ENCODE measurements at regions of chr1 and their contacts with region 1.

Region 1: GRCh38 chr1:205591522-205592351 is 40.1 kb downstream of the ELK4 start:
- DNase-seq: peak; percentile 72 to 94 (median 86)
- ATAC-seq: peak; percentile 83 to 89 (median 88)
- H3K4me3 ChIP-seq: peak overlapping the region; percentile 39 to 46
- H3K4me3 Mint-ChIP-seq: peak overlapping the region; percentile 74 to 89 (median 79)
- H3K27ac ChIP-seq: peak overlapping the region; percentile 89
- H3K27ac Mint-ChIP-seq: peak overlapping the region; percentile 86 to 88
- H3K4me1 ChIP-seq: peaks cover 14 to 33% of the 10 kb centered on the region in 2 experiments
- H3K4me1 Mint-ChIP-seq: peaks cover 40 to 54% (median 51%) of the 10 kb centered on the region in 3 donors
- H3K27me3 ChIP-seq: peaks cover 0 to 6% of the 10 kb centered on the region in 2 experiments
- H3K27me3 Mint-ChIP-seq: no peaks in the 10 kb centered on the region

Region 2: GRCh38 chr1:205613288-205613687 is 21.6 kb after region 1 on chr1:
- CTCF ChIA-PET with region 1: interaction called in 1 of 2 experiments, 5 read pairs
- POLR2A ChIA-PET with region 1: interaction called in 1 of 2 experiments, 10 read pairs
- DNase-seq: peak in 1 of 35 experiments; percentile 23
- ATAC-seq: no peak
- H3K4me3 ChIP-seq: no peak overlapping the region
- H3K4me3 Mint-ChIP-seq: no peak overlapping the region
- H3K27ac ChIP-seq: no peak overlapping the region
- H3K27ac Mint-ChIP-seq: no peak overlapping the region
- H3K4me1 ChIP-seq: peaks cover 5 to 21% of the 10 kb centered on the region in 2 experiments
- H3K4me1 Mint-ChIP-seq: peaks cover 55 to 58% (median 56%) of the 10 kb centered on the region in 3 donors
- H3K27me3 ChIP-seq: no peaks in the 10 kb centered on the region
- H3K27me3 Mint-ChIP-seq: no peaks in the 10 kb centered on the region

Region 3: DNA sequence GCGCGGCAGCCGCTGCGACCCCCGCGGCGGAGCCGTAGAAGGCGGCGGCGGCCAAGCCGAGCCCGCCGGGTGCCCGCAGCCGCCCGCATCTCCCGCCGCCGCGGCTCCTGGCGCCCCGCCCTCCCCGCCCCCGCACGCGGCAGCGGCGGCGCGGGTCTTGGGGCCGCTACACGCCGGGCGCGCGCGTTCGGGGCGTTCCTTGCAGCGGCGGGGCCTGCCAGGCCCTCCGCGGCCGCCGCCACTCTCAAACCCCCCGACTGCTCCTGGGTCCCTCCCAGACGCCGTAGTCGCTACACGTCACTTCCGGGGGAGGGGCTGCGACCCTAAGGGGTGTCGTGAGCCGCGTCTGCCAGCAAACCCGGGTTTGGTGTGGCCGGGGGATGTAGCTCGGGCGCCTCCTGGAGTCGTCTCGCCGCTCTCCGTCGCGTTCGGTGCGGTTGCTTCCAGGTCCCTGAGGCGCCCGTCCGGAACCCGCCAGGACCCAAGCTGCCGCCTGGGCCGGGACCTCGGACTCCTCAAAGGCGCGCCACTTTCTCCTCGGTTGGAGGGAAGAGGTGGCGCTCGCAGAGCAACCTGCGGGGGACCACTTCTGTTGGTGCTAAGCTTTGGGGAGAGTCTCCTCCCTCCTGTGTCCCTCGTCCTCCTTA is 40.1 kb after region 1 on chr1 and contains the start of gene ELK4:
- CTCF ChIA-PET with region 1: interaction called, 17 to 89 read pairs
- POLR2A ChIA-PET with region 1: interaction called, 8 to 13 read pairs
- DNase-seq: peak; percentile 99 to 100 (median 100)
- ATAC-seq: peak; percentile 82 to 86 (median 84)
- H3K4me3 ChIP-seq: peak within 1 kb of the TSS; percentile 79 to 91
- H3K4me3 Mint-ChIP-seq: peak within 1 kb of the TSS; percentile 85 to 95 (median 91)
- H3K27ac ChIP-seq: peak within 1 kb of the TSS; percentile 94
- H3K27ac Mint-ChIP-seq: peak within 1 kb of the TSS; percentile 95 to 98
- H3K4me1 ChIP-seq: peaks cover 22 to 29% of the 10 kb centered on the region in 2 experiments
- H3K4me1 Mint-ChIP-seq: peaks cover 41 to 48% (median 41%) of the 10 kb centered on the region in 3 donors
- H3K27me3 ChIP-seq: no peaks in the 10 kb centered on the region
- H3K27me3 Mint-ChIP-seq: no peaks in the 10 kb centered on the region
- total RNA-seq, gene ELK4: 131 to 185 (median 173) TPM

Region 4: GRCh38 chr1:205639567-205639966 is 47.8 kb after region 1 on chr1:
- CTCF ChIA-PET with region 1: interaction called, 6 to 14 read pairs
- POLR2A ChIA-PET with region 1: interaction called in 1 of 2 experiments, 3 read pairs
- DNase-seq: no peak
- ATAC-seq: no peak
- H3K4me3 ChIP-seq: no peak overlapping the region
- H3K4me3 Mint-ChIP-seq: no peak overlapping the region
- H3K27ac ChIP-seq: no peak overlapping the region
- H3K27ac Mint-ChIP-seq: no peak overlapping the region
- H3K4me1 ChIP-seq: no peaks in the 10 kb centered on the region
- H3K4me1 Mint-ChIP-seq: peaks cover 0 to 2% (median 0%) of the 10 kb centered on the region in 3 donors
- H3K27me3 ChIP-seq: peaks cover 0 to 4% of the 10 kb centered on the region in 2 experiments
- H3K27me3 Mint-ChIP-seq: peaks cover 12 to 20% of the 10 kb centered on the region in 2 donors

Region 5: GRCh38 chr1:205711104-205712020 is 119.6 kb after region 1 on chr1:
- CTCF ChIA-PET with region 1: interaction called, 10 to 24 read pairs
- POLR2A ChIA-PET with region 1: no interaction called
- DNase-seq: peak in 32 of 35 experiments; percentile 12 to 88 (median 48)
- ATAC-seq: peak; percentile 81 to 91 (median 86)
- H3K4me3 ChIP-seq: no peak overlapping the region
- H3K4me3 Mint-ChIP-seq: no peak overlapping the region
- H3K27ac ChIP-seq: no peak overlapping the region
- H3K27ac Mint-ChIP-seq: peak overlapping the region in 1 of 2 donors; percentile 4
- H3K4me1 ChIP-seq: no peaks in the 10 kb centered on the region
- H3K4me1 Mint-ChIP-seq: peaks cover 5 to 17% (median 14%) of the 10 kb centered on the region in 3 donors
- H3K27me3 ChIP-seq: no peaks in the 10 kb centered on the region
- H3K27me3 Mint-ChIP-seq: no peaks in the 10 kb centered on the region

Measured in T-cell (primary cell).